ENCODE measurements at regions of chr6 and their contacts with region 1.

Region 1: GRCh38 chr6:37083243-37084138 is 78.0 kb downstream of the FGD2 start:
- DNase-seq: peak; percentile 91 to 96 (median 95)
- ATAC-seq: peak; percentile 95 to 98 (median 96)
- H3K4me3 ChIP-seq: peak overlapping the region; percentile 4 to 33 (median 32)
- H3K27ac ChIP-seq: peak overlapping the region; percentile 40 to 75 (median 49)
- H3K4me1 ChIP-seq: peaks cover 0 to 32% (median 14%) of the 10 kb centered on the region in 4 donors
- H3K27me3 ChIP-seq: no peaks in the 10 kb centered on the region
- CTCF ChIP-seq: no peak
- POLR2A ChIP-seq: peak; percentile 79

Region 2: DNA sequence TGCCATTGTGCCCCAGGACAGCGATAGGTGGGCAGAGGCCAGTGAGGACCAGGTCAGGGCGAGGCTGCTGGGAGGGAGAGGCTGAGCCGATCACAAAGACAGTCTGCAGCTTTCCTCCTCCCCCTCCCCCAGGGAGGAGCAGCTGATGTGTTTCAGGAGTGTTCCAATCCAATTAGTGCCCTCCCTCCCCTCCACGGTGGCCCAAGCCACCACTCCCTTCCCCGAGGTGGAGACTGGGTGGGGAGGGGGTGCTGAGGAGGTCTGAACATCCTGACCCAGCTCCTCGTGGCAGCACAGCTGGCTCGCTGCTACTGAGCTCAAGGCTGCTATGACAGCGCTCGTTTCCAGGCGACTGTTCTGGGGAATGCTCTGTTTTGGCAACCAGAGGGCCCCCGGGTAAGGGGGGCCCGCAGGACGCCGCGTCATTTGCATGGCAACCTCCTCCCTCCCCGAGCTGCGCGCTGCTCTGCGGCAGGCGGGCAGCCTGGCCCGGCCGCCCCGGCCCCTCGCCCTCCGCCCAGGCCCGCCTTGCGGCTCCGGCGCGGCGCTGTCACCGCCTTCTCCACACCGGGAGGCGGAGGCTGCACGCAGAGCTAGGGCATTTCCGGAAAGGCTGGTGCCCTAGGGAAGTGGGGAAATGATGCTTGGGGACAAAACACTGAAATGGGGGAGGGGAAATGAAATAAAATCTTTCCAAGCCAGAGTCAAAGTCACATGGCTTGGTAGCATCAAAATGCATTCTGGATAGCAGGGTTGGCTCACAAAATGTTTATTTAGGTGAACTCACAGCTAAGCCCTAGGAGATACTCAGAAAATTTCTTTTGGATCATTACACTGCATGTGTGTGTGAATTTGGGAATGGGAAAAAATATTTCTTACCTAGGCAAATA is 19.0 kb after region 1 on chr6:
- intact Hi-C with region 1: loop called in 1 of 2 experiments (anchors 2 kb)
- DNase-seq: peak; percentile 81 to 87 (median 84)
- ATAC-seq: peak; percentile 65 to 80 (median 78)
- H3K4me3 ChIP-seq: peak overlapping the region; percentile 25 to 55 (median 44)
- H3K27ac ChIP-seq: peak overlapping the region; percentile 71 to 90 (median 85)
- H3K4me1 ChIP-seq: peaks cover 0 to 33% (median 13%) of the 10 kb centered on the region in 4 donors
- H3K27me3 ChIP-seq: no peaks in the 10 kb centered on the region
- CTCF ChIP-seq: no peak
- POLR2A ChIP-seq: peak; percentile 88

Region 3: GRCh38 chr6:37314487-37315156 is 231.1 kb after region 1 on chr6:
- intact Hi-C with region 1: no loop called
- DNase-seq: peak in 2 of 3 donors; percentile 49 to 52
- ATAC-seq: peak; percentile 77 to 84 (median 82)
- H3K4me3 ChIP-seq: no peak overlapping the region
- H3K27ac ChIP-seq: no peak overlapping the region
- H3K4me1 ChIP-seq: no peaks in the 10 kb centered on the region
- H3K27me3 ChIP-seq: no peaks in the 10 kb centered on the region
- CTCF ChIP-seq: peak; percentile 35 to 68 (median 66)
- POLR2A ChIP-seq: no peak